ENCODE measurements at regions of chr1 and their contacts with region 1.

Region 1: DNA sequence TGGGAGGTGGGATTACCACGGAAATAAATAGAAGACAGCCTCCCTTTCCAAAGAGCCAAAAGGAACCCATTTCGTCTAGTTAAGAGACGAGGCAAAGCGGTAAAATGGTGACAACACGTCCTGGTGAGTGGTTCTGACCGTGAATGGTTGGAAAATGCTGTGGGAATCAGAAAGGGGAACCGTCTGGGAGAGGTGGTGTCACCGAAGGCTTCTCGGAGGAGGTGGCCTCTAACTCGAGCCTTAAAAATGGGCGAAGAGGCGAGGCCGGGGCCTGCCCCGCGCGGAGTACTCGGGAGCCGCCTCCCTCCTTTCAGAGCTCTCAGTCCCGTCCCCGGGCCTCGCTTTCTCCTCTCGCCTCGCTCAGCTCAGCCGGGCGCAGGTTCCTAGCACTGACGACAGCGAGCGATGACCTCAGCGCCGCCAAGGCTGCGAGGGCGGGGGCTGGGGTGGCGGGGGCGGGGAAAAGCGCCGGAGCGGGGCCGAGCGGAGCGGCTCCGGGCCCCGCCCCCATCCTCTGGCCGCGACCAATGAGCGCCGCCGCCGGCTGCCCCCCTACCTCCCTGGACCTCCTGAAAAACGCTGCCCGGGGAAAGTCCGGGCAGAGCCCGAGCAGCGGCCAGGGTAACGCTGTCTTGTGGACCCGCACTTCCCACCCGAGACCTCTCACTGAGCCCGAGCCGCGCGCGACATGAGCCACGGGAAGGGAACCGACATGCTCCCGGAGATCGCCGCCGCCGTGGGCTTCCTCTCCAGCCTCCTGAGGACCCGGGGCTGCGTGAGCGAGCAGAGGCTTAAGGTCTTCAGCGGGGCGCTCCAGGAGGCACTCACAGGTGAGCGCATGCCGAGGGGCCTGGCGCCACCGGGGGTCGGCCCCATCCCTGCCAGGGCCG is at the start of gene BTG2:
- DNase-seq: peak; percentile 90 to 94 (median 91)
- H3K4me3 ChIP-seq: peak within 1 kb of the TSS; percentile 87 to 95
- H3K4me3 Mint-ChIP-seq: peak within 1 kb of the TSS; percentile 90 to 99 (median 98)
- H3K27ac ChIP-seq: peak within 1 kb of the TSS; percentile 100
- H3K27ac Mint-ChIP-seq: peak within 1 kb of the TSS; percentile 97 to 100 (median 99)
- H3K4me1 ChIP-seq: peaks cover 50% of the 10 kb centered on the region
- H3K4me1 Mint-ChIP-seq: peaks cover 48 to 82% (median 57%) of the 10 kb centered on the region in 4 donors
- H3K27me3 ChIP-seq: no peaks in the 10 kb centered on the region
- H3K27me3 Mint-ChIP-seq: no peaks in the 10 kb centered on the region
- total RNA-seq, gene BTG2: 197 to 201 TPM

Region 2: GRCh38 chr1:203290261-203291089 is 14.7 kb before region 1 on chr1:
- CTCF ChIA-PET with region 1: interaction called, 141 read pairs
- POLR2A ChIA-PET with region 1: interaction called, 669 read pairs
- intact Hi-C with region 1: loop called (anchors 1 kb)
- DNase-seq: peak; percentile 96 to 98 (median 97)
- H3K4me3 ChIP-seq: peak overlapping the region; percentile 11 to 65
- H3K4me3 Mint-ChIP-seq: peak overlapping the region; percentile 75 to 89 (median 84)
- H3K27ac ChIP-seq: peak overlapping the region; percentile 97
- H3K27ac Mint-ChIP-seq: peak overlapping the region; percentile 98 to 100 (median 100)
- H3K4me1 ChIP-seq: peaks cover 61% of the 10 kb centered on the region
- H3K4me1 Mint-ChIP-seq: peaks cover 48 to 69% (median 58%) of the 10 kb centered on the region in 4 donors
- H3K27me3 ChIP-seq: no peaks in the 10 kb centered on the region
- H3K27me3 Mint-ChIP-seq: no peaks in the 10 kb centered on the region

Region 3: GRCh38 chr1:203390298-203390697 is 85.1 kb after region 1 on chr1:
- CTCF ChIA-PET with region 1: no interaction called
- POLR2A ChIA-PET with region 1: no interaction called
- intact Hi-C with region 1: no loop called
- DNase-seq: no peak
- H3K4me3 ChIP-seq: no peak overlapping the region
- H3K4me3 Mint-ChIP-seq: no peak overlapping the region
- H3K27ac ChIP-seq: no peak overlapping the region
- H3K27ac Mint-ChIP-seq: no peak overlapping the region
- H3K4me1 ChIP-seq: no peaks in the 10 kb centered on the region
- H3K4me1 Mint-ChIP-seq: no peaks in the 10 kb centered on the region
- H3K27me3 ChIP-seq: no peaks in the 10 kb centered on the region
- H3K27me3 Mint-ChIP-seq: peaks cover 21 to 28% of the 10 kb centered on the region in 2 donors

Measured in CD4-positive, alpha-beta memory T cell (primary cell).